ENCODE measurements at regions of chr13 and their contacts with region 1.

Region 1: DNA sequence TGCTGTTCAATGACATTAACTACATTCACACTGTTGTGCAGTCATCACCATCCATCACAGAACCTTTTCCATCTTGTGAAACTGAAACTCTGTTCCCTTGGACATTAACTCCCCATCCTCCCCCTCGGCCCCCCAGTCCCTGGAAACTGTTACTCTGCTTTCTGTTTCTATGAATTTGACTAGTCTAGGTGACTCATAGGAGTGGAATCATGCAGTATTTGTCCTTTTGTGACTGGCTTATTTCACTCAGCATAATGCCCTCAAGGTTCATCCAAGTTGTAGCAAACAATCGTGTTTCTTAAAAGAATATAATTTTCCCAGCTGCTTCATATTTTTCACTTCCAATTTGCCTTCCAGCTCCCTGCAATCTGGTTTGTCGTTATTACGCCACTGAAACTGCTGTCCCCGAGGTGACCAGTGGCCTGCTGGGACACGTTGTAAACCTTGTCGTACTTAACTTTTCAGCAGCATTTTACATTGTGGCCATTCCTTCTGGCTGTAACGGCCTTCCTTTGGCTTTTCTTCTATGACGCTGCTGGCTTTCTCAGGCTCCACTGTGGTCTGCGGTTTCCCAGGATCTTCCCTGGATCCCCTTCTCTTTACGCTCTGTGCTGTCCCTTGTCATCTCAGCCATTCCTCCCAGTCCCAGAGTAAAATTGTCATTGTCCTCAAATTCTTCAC is 74.0 kb downstream of the DHRS12 start:
- DNase-seq: peak; percentile 90
- ATAC-seq: peak; percentile 78
- H3K4me3 ChIP-seq: peak overlapping the region; percentile 11; the same call in 1 of the 2 replicates
- H3K27ac ChIP-seq: peak overlapping the region; percentile 88
- H3K4me1 ChIP-seq: peaks cover 34% of the 10 kb centered on the region
- H3K27me3 ChIP-seq: no peaks in the 10 kb centered on the region
- CTCF ChIP-seq: no peak
- POLR2A ChIP-seq: no peak
- RAD21 ChIP-seq: peak; percentile 22

Region 2: DNA sequence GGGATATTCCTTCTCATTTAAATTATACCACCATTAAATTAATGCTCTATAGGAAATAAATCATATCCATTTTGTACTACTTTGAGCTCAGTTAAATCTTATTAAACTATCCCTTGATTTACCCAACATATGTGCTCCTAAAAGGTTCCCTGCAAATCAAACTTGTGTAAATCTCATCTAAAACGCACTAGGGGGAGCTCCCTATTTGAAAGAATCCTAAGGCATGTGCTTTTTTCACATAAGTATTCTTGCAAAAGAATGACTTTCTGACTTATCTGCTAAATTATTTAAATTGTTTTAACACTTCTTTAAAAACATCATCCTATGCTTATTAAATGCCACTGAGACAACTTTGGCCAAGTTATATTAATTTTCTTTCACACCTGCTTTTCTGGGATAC is 285.1 kb before region 1 on chr13:
- CTCF ChIA-PET with region 1: interaction called, 3 read pairs
- POLR2A ChIA-PET with region 1: no interaction called
- dilution Hi-C with region 1: no loop called
- in situ Hi-C with region 1: loop called (anchors 10 kb)
- intact Hi-C with region 1: no loop called
- DNase-seq: peak; percentile 68
- ATAC-seq: no peak; the same call in 1 of the 2 replicates
- H3K4me3 ChIP-seq: no peak overlapping the region
- H3K27ac ChIP-seq: no peak overlapping the region
- H3K4me1 ChIP-seq: no peaks in the 10 kb centered on the region
- H3K27me3 ChIP-seq: no peaks in the 10 kb centered on the region
- CTCF ChIP-seq: peak; percentile 55
- POLR2A ChIP-seq: no peak
- RAD21 ChIP-seq: peak; percentile 63

Region 3: GRCh38 chr13:51494156-51494555 is 235.8 kb before region 1 on chr13:
- CTCF ChIA-PET with region 1: no interaction called
- POLR2A ChIA-PET with region 1: no interaction called
- dilution Hi-C with region 1: no loop called
- in situ Hi-C with region 1: no loop called
- intact Hi-C with region 1: no loop called
- DNase-seq: peak; percentile 60
- ATAC-seq: peak; percentile 75
- H3K4me3 ChIP-seq: no peak overlapping the region
- H3K27ac ChIP-seq: no peak overlapping the region
- H3K4me1 ChIP-seq: no peaks in the 10 kb centered on the region
- H3K27me3 ChIP-seq: no peaks in the 10 kb centered on the region
- CTCF ChIP-seq: no peak
- POLR2A ChIP-seq: no peak
- RAD21 ChIP-seq: no peak

Region 4: GRCh38 chr13:51590971-51591627 is 138.9 kb before region 1 on chr13:
- CTCF ChIA-PET with region 1: no interaction called
- POLR2A ChIA-PET with region 1: no interaction called
- dilution Hi-C with region 1: no loop called
- in situ Hi-C with region 1: no loop called
- intact Hi-C with region 1: loop called (anchors 2 kb)
- DNase-seq: peak; percentile 90
- ATAC-seq: peak; percentile 87
- H3K4me3 ChIP-seq: peak overlapping the region; percentile 12; the same call in 1 of the 2 replicates
- H3K27ac ChIP-seq: peak overlapping the region; percentile 80; the same call in 1 of the 2 replicates
- H3K4me1 ChIP-seq: peaks cover 7% of the 10 kb centered on the region
- H3K27me3 ChIP-seq: no peaks in the 10 kb centered on the region
- CTCF ChIP-seq: 0 out of 2 replicates have a peak, but pooled peaks have one; percentile 11
- POLR2A ChIP-seq: no peak
- RAD21 ChIP-seq: no peak; the same call in none of the 2 replicates

Region 5: DNA sequence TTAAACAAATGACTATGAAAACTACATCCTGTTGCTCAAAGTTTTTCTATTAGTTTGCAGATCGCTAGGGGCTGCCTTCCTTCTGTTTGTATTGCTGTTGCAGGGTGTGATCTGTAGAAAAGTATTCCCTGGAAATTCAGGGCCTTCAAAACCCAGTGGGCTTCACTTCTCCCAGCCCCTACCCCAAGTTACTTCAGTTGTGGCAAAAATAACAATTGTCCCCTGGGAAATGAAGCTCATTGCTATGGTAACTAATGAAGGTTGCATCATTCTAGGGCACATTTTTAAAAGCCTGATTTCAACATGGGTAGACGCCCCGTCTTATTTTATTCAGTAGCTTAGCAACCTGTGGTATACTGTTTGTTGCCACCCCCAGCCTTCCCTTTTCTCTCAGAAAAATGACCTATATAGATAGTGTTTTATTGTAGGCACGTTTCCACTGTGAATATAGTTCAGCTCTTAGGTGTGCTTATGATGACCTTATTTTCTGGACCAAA is 84.8 kb before region 1 on chr13:
- CTCF ChIA-PET with region 1: no interaction called
- POLR2A ChIA-PET with region 1: no interaction called
- dilution Hi-C with region 1: no loop called
- in situ Hi-C with region 1: no loop called
- intact Hi-C with region 1: loop called (anchors 2 kb)
- DNase-seq: peak; percentile 57
- ATAC-seq: no peak
- H3K4me3 ChIP-seq: no peak overlapping the region
- H3K27ac ChIP-seq: peak overlapping the region; percentile 39; the same call in 1 of the 2 replicates
- H3K4me1 ChIP-seq: peaks cover 15% of the 10 kb centered on the region
- H3K27me3 ChIP-seq: no peaks in the 10 kb centered on the region
- CTCF ChIP-seq: no peak
- POLR2A ChIP-seq: no peak
- RAD21 ChIP-seq: no peak